Thyroid gland (tissue), 4 donors: ENCODE measurements at regions of chr4 and their contacts with region 1.

Region 1: DNA sequence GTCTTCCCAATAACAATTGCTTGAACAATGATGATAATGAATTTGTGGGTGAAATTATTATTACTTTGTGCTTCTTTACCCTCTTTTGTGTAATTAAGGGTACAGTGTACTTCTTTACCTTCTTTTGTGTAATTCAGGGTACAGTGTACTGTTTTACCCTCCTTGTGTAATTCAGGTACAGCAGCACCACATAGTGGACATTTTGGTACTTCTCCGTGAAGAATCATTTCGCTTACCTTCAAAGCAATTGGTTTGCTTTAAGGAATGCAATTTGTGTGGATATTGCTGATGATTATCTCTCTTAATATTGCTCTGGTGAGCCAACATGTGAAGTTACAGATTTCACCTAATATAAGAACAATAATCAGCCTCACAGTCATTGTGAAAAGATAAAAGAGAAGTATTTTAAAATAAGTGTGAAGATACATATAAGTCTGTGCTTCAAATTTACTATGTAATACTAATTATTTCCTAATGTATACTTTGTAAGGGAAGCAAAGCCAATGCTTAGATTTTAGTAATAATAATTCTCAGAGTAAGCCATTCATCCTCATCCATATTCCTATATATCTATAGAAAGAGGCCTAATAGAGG is 27.2 kb upstream of the SEC24B start:
- DNase-seq: peak; percentile 33
- H3K4me3 ChIP-seq: no peak overlapping the region
- H3K27ac ChIP-seq: no peak overlapping the region
- H3K4me1 ChIP-seq: peaks cover 0 to 3% of the 10 kb centered on the region in 2 donors
- H3K27me3 ChIP-seq: no peaks in the 10 kb centered on the region
- CTCF ChIP-seq: peak; percentile 55 to 92 (median 70)
- POLR2A ChIP-seq: no peak

Region 2: DNA sequence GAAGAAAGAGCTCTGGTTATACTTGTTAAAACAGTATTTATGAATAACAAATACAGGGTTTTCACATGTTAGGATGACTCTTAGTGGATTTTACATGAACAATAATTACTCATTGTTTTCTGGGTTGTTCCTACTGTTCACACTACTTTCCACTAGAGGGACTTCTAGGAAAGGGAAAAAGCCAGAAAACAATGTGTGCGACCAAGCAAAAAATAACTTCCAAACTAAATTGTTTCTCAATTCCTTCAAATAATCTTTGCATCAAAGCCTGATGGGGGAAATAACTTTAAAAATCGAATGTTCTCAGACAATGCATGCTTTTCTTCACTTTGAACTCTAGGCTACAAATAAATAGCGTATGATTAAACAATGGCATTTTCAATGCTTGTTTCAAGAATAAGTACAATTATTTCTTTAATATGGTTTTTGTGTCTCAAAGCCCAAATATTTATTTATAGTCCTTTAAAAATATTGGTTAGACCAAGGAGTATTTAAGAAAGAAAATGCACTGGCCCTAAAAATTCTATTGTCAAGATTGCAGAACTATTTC is 571.5 kb before region 1 on chr4:
- intact Hi-C with region 1: loop called (anchors 10 kb)
- DNase-seq: no peak
- H3K4me3 ChIP-seq: no peak overlapping the region
- H3K27ac ChIP-seq: no peak overlapping the region
- H3K4me1 ChIP-seq: peaks cover 2 to 7% of the 10 kb centered on the region in 2 donors
- H3K27me3 ChIP-seq: no peaks in the 10 kb centered on the region
- CTCF ChIP-seq: peak in 5 of 6 experiments; percentile 25 to 64 (median 62)
- POLR2A ChIP-seq: no peak